ENCODE measurements at regions of chr17 and their contacts with region 1.

Region 1: DNA sequence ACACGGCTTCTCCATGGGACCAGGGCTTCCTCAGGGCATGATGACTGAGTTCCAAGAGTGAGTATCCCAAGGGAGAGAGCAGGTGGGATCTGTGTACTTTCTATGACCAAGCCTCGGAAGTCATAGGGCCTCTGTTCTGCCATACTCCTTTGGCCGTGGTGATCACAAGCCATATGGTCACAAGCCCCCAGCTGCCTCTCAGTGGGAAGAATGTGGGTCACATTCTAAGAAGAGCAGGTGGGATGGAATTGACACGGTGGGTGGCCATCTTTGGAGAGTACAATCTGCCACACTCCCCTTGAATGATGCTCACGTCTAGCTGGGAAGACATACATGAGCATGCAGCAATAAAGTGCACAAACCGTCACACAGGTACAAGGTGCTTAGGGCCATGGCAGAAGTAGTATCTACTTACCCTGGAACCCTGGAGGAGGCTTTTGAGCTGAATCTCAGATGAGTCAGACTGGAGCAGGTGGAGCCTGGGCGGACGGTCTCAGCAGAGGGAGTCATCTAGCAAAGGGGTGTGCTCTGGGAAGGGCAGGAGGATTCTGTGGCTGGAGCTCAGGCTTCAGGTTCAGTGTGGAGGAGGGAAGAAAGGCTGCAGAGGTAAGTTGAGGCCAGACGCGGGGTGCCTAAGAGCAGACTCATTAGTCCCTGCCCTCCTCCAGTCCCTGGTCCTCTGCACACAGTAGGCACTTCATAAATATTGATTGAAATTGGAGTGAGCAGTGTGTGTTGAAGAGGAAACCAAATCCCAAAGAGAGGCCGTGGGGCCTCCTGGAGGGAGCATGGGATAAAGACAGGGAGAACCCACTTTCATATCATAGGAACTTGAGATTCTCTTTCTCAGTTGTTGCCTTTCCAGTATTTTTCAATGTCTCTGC is 26.6 kb downstream of the GOSR2 start:
- DNase-seq: no peak
- ATAC-seq: no peak
- H3K4me3 ChIP-seq: no peak overlapping the region
- H3K27ac ChIP-seq: no peak overlapping the region
- H3K4me1 ChIP-seq: no peaks in the 10 kb centered on the region
- H3K27me3 ChIP-seq: no peaks in the 10 kb centered on the region
- CTCF ChIP-seq: no peak
- POLR2A ChIP-seq: no peak

Region 2: GRCh38 chr17:46908068-46908737 is 41.3 kb before region 1 on chr17:
- intact Hi-C with region 1: no loop called
- DNase-seq: no peak
- ATAC-seq: no peak
- H3K4me3 ChIP-seq: no peak overlapping the region
- H3K27ac ChIP-seq: no peak overlapping the region
- H3K4me1 ChIP-seq: no peaks in the 10 kb centered on the region
- H3K27me3 ChIP-seq: no peaks in the 10 kb centered on the region
- CTCF ChIP-seq: no peak
- POLR2A ChIP-seq: no peak

Region 3: GRCh38 chr17:46991617-46992016 is 42.1 kb after region 1 on chr17:
- intact Hi-C with region 1: loop called in 1 of 2 experiments (anchors 5 kb)
- DNase-seq: no peak
- ATAC-seq: peak in 1 of 4 donors; percentile 65
- H3K4me3 ChIP-seq: no peak overlapping the region
- H3K27ac ChIP-seq: no peak overlapping the region
- H3K4me1 ChIP-seq: no peaks in the 10 kb centered on the region
- H3K27me3 ChIP-seq: no peaks in the 10 kb centered on the region
- CTCF ChIP-seq: no peak
- POLR2A ChIP-seq: no peak

Region 4: GRCh38 chr17:47004906-47005305 is 55.4 kb after region 1 on chr17:
- intact Hi-C with region 1: loop called in 1 of 2 experiments (anchors 5 kb)
- DNase-seq: no peak
- ATAC-seq: no peak
- H3K4me3 ChIP-seq: no peak overlapping the region
- H3K27ac ChIP-seq: no peak overlapping the region
- H3K4me1 ChIP-seq: no peaks in the 10 kb centered on the region
- H3K27me3 ChIP-seq: no peaks in the 10 kb centered on the region
- CTCF ChIP-seq: no peak
- POLR2A ChIP-seq: no peak

Region 5: GRCh38 chr17:47087093-47087492 is 137.6 kb after region 1 on chr17:
- intact Hi-C with region 1: no loop called
- DNase-seq: no peak
- ATAC-seq: no peak
- H3K4me3 ChIP-seq: no peak overlapping the region
- H3K27ac ChIP-seq: no peak overlapping the region
- H3K4me1 ChIP-seq: no peaks in the 10 kb centered on the region
- H3K27me3 ChIP-seq: no peaks in the 10 kb centered on the region
- CTCF ChIP-seq: no peak
- POLR2A ChIP-seq: no peak

Measured in right lobe of liver (tissue), 6 donors.